ENCODE measurements at regions of chr5 and their contacts with region 1.

Region 1: GRCh38 chr5:159631001-159631400 is 285.3 kb upstream of the ADRA1B start:
- DNase-seq: no peak
- ATAC-seq: no peak
- H3K4me3 Mint-ChIP-seq: no peak overlapping the region
- H3K27ac Mint-ChIP-seq: no peak overlapping the region
- H3K4me1 Mint-ChIP-seq: no peaks in the 10 kb centered on the region
- H3K27me3 Mint-ChIP-seq: peaks cover 6% of the 10 kb centered on the region
- CTCF ChIP-seq: no peak

Region 2: DNA sequence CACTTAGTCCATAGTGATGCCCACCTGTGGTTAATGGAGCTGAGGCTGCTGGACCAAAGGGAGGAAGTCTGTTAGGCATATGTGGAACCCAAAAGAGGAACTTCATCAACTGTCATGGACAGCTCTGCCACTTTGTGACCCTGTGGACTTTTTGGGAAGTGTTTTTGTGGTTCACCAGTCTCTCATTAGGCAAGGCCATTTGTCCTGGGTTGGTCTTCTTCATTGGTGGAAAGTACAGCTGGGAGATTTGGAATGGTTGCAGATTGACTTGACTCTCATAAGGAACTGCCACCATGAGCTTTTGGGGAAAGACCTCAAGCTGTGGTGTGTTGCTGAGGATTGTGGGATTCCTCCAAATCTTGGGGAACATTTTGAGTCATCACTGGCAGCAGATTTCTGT is 268.8 kb before region 1 on chr5:
- CTCF ChIA-PET with region 1: no interaction called
- POLR2A ChIA-PET with region 1: no interaction called
- intact Hi-C with region 1: no loop called
- DNase-seq: no peak
- ATAC-seq: no peak
- H3K4me3 Mint-ChIP-seq: no peak overlapping the region
- H3K27ac Mint-ChIP-seq: no peak overlapping the region
- H3K4me1 Mint-ChIP-seq: peaks cover 15% of the 10 kb centered on the region
- H3K27me3 Mint-ChIP-seq: no peaks in the 10 kb centered on the region
- CTCF ChIP-seq: no peak

Region 3: GRCh38 chr5:159531554-159532105 is 99.4 kb before region 1 on chr5:
- CTCF ChIA-PET with region 1: no interaction called
- POLR2A ChIA-PET with region 1: no interaction called
- intact Hi-C with region 1: no loop called
- DNase-seq: no peak
- ATAC-seq: no peak
- H3K4me3 Mint-ChIP-seq: no peak overlapping the region
- H3K27ac Mint-ChIP-seq: no peak overlapping the region
- H3K4me1 Mint-ChIP-seq: no peaks in the 10 kb centered on the region
- H3K27me3 Mint-ChIP-seq: no peaks in the 10 kb centered on the region
- CTCF ChIP-seq: no peak

Region 4: DNA sequence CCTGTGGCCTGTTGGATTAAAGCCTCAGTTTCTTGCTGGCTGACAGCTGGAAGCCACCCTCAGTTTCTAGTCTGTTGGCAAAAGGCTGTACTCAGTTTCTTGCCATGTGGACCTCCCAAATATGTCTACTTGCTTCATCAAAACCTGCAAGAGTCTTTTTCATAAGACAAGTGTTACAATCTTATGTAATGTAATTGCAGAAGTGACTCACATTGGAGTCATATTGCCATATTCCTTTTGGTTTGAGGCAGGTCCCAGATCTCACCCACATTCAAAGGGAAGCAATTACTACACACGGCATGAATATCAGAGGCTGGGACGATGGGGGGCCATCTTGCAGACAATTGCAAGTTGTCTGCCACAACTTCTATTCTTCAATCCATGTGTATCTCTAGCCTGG is 14.0 kb before region 1 on chr5:
- CTCF ChIA-PET with region 1: no interaction called
- POLR2A ChIA-PET with region 1: interaction called, 18 read pairs
- intact Hi-C with region 1: no loop called
- DNase-seq: no peak
- ATAC-seq: no peak
- H3K4me3 Mint-ChIP-seq: no peak overlapping the region
- H3K27ac Mint-ChIP-seq: no peak overlapping the region
- H3K4me1 Mint-ChIP-seq: no peaks in the 10 kb centered on the region
- H3K27me3 Mint-ChIP-seq: peaks cover 9% of the 10 kb centered on the region
- CTCF ChIP-seq: no peak

Measured in activated B cell treated with CpG ODN at 0.5 μM for 24 hours (primary cell).